Activated CD4-positive, alpha-beta T cell treated with anti-CD3 and anti-CD28 coated beads, Interleukin-2, amount 10 ng/mL, durations not matched to agents 7 days and 5 days (primary cell): ENCODE measurements at regions of chr15 and their contacts with region 1.

Region 1: GRCh38 chr15:84734794-84735479 is 13.5 kb upstream of the ZNF592 start:
- DNase-seq: peak; percentile 83
- H3K4me3 Mint-ChIP-seq: peak overlapping the region; percentile 64
- H3K27ac Mint-ChIP-seq: peak overlapping the region; percentile 96
- H3K4me1 Mint-ChIP-seq: peaks cover 57% of the 10 kb centered on the region
- H3K27me3 Mint-ChIP-seq: no peaks in the 10 kb centered on the region

Region 2: DNA sequence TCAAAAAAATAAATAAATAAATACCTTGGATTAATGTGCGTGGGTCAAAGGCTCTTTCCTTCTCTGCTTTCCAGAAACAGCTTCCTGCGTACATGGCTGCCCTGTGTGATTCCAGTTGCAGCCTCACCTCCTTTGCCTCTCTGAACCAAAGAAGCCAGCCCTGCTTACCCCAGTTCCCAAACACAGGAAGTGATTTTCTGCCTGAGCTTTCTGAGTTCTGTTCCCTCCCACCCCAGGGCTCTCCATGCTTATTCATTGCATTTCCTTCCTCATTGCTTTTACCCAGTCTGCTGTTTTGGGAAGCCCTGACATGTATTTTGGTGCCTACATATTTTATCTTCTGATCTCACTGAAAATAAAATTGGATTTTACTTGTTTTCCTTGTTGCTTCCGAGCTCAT is 118.7 kb before region 1 on chr15:
- CTCF ChIA-PET with region 1: no interaction called
- POLR2A ChIA-PET with region 1: no interaction called
- DNase-seq: no peak
- H3K4me3 Mint-ChIP-seq: no peak overlapping the region
- H3K27ac Mint-ChIP-seq: no peak overlapping the region
- H3K4me1 Mint-ChIP-seq: peaks cover 2% of the 10 kb centered on the region
- H3K27me3 Mint-ChIP-seq: no peaks in the 10 kb centered on the region

Region 3: DNA sequence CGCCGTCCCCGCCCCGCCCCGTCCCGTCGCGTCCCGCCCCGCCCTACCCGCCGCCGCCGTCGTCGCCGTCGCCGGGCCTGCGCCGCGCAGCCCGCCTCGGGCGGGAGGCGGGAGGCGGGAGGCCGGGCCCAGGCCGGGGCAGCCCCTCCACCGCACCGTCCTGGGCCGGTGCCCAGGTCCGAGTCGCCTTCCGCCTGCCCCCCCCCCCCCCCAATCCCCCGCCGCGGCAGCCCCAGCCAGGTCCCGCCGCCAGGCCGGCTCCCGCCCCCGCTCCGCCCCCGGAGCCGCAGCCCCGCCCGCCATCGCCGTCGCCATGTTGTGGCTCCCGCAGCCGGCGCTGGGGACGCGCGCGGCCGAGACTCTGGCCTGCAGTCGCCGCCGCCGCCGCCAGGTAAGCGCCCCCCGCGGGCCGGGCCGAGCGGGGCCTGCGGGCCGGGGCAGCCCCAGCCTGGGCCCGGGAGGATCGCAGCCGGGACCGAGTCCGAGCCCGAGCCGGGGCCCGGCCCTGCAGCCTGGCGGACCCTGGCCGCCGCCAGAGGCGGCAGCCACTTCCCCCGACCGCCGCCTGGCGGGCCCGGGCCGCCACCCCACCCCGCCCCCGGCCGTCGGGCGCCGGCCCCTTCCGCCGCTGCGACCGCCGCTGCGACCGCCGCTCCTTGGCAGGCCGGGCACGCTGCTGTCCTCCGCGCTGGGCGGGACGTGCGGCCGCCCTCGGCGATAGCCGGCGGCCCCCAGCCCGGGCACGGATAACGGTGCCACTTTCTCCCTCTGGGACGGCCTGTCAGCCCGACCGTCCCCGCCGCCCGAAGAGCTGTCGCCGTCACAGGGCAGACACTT is 13.6 kb after region 1 on chr15 and contains the start of gene ZNF592:
- CTCF ChIA-PET with region 1: interaction called, 10 read pairs
- POLR2A ChIA-PET with region 1: interaction called, 5 read pairs
- DNase-seq: peak; percentile 77
- H3K4me3 Mint-ChIP-seq: peak within 1 kb of the TSS; percentile 89
- H3K27ac Mint-ChIP-seq: peak within 1 kb of the TSS; percentile 93
- H3K4me1 Mint-ChIP-seq: peaks cover 60% of the 10 kb centered on the region
- H3K27me3 Mint-ChIP-seq: no peaks in the 10 kb centered on the region
- total RNA-seq, gene ZNF592: 44.3 to 51.9 TPM